ENCODE measurements at regions of chr3 and their contacts with region 1.

Region 1: GRCh38 chr3:64093825-64094712 is 70.8 kb upstream of the PSMD6 start:
- DNase-seq: peak; percentile 73
- ATAC-seq: peak; percentile 72
- H3K4me3 ChIP-seq: no peak overlapping the region
- H3K27ac ChIP-seq: peak overlapping the region; percentile 89
- H3K4me1 ChIP-seq: peaks cover 37% of the 10 kb centered on the region
- H3K27me3 ChIP-seq: no peaks in the 10 kb centered on the region
- CTCF ChIP-seq: no peak

Region 2: GRCh38 chr3:64062876-64063785 is 30.9 kb before region 1 on chr3:
- CTCF ChIA-PET with region 1: no interaction called
- POLR2A ChIA-PET with region 1: no interaction called
- intact Hi-C with region 1: loop called (anchors 1 kb)
- DNase-seq: peak; percentile 69
- ATAC-seq: peak; percentile 82
- H3K4me3 ChIP-seq: no peak overlapping the region
- H3K27ac ChIP-seq: peak overlapping the region; percentile 92
- H3K4me1 ChIP-seq: peaks cover 14% of the 10 kb centered on the region
- H3K27me3 ChIP-seq: no peaks in the 10 kb centered on the region
- CTCF ChIP-seq: no peak

Region 3: GRCh38 chr3:64131725-64132469 is 37.8 kb after region 1 on chr3:
- CTCF ChIA-PET with region 1: no interaction called
- POLR2A ChIA-PET with region 1: no interaction called
- intact Hi-C with region 1: no loop called
- DNase-seq: no peak
- ATAC-seq: no peak
- H3K4me3 ChIP-seq: no peak overlapping the region
- H3K27ac ChIP-seq: no peak overlapping the region
- H3K4me1 ChIP-seq: no peaks in the 10 kb centered on the region
- H3K27me3 ChIP-seq: no peaks in the 10 kb centered on the region
- CTCF ChIP-seq: no peak

Region 4: DNA sequence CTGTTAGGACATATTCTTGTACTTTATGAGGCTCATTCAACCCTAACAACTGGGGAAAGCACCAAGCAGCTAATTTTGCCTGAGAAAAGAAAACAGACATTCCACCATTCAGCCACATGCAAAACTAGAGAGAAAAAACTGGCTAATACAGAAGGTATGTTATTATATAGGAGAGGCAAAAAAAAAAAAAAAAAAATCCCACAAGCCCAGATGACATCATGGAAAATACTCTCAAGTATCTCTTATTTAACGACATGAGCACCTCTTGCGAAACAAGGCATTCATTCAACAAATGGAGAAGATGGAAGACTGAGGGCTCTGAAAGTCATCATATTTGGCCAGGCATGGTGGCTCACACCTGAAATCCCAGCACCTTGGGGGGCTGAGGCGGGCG is 69.7 kb after region 1 on chr3:
- CTCF ChIA-PET with region 1: no interaction called
- POLR2A ChIA-PET with region 1: no interaction called
- intact Hi-C with region 1: loop called (anchors 2 kb)
- DNase-seq: peak; percentile 62
- ATAC-seq: no peak
- H3K4me3 ChIP-seq: no peak overlapping the region
- H3K27ac ChIP-seq: peak overlapping the region; percentile 76
- H3K4me1 ChIP-seq: peaks cover 49% of the 10 kb centered on the region
- H3K27me3 ChIP-seq: no peaks in the 10 kb centered on the region
- CTCF ChIP-seq: no peak

Measured in PC-3 (cell line).